ENCODE measurements at regions of chr9 and their contacts with region 1.

Region 1: DNA sequence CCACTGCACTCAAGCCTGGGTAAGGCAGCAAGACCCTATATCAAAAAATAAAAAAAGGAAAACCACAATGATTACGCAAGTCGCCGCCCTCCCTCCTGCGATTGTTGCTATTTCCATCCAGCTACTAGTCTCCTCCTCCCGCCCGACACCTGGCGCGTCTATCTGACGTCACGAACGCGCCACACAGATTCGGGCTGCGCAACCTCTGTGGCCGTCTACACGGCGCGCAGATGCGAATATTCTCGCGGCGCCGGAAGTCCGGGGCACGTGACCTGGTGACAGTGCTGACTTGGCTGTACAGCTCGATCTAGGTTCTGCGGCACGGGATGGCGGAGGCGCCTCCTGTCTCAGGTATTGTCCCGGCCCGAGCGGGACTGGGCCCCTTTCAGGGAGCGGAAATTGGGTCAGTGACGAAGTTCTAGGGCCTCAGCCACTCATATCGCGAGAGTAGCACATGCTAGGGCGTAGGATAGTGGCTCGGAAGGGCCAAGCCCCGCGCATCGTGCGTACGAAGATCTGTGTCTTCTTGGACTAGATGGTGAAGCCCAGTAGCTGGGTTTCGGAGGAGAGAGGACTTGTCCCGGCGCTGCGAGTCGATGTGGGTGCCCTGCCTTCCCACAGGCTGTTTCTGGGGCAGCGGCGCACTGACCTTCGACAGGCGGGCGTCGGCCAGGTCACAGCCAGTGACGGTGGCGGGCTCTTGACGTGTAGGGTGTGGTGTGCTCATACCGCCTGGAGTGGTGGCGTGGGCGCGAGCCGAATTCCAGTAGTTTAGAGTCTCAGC is at the start of gene NFX1:
- DNase-seq: peak; percentile 100
- ATAC-seq: peak; percentile 82
- H3K4me3 ChIP-seq: peak within 1 kb of the TSS; percentile 80 to 98 (median 86)
- H3K4me3 Mint-ChIP-seq: peak within 1 kb of the TSS; percentile 99
- H3K27ac ChIP-seq: peak within 1 kb of the TSS; percentile 99 to 100
- H3K27ac Mint-ChIP-seq: peak within 1 kb of the TSS; percentile 100
- H3K4me1 ChIP-seq: peaks cover 43 to 58% of the 10 kb centered on the region in 2 donors
- H3K4me1 Mint-ChIP-seq: peaks cover 62% of the 10 kb centered on the region
- H3K27me3 ChIP-seq: no peaks in the 10 kb centered on the region
- H3K27me3 Mint-ChIP-seq: no peaks in the 10 kb centered on the region
- CTCF ChIP-seq: no peak
- total RNA-seq, gene NFX1: 76.3 and 81.5 TPM in 2 replicates

Region 2: GRCh38 chr9:32550562-32551433 is 739.6 kb before region 1 on chr9:
- CTCF ChIA-PET with region 1: no interaction called
- POLR2A ChIA-PET with region 1: no interaction called
- intact Hi-C with region 1: loop called (anchors 10 kb)
- DNase-seq: peak; percentile 97
- ATAC-seq: peak; percentile 84
- H3K4me3 ChIP-seq: peak overlapping the region; percentile 86 to 98 (median 87)
- H3K4me3 Mint-ChIP-seq: peak overlapping the region; percentile 91
- H3K27ac ChIP-seq: peak overlapping the region; percentile 89 to 92
- H3K27ac Mint-ChIP-seq: peak overlapping the region; percentile 91
- H3K4me1 ChIP-seq: peaks cover 14 to 15% of the 10 kb centered on the region in 2 donors
- H3K4me1 Mint-ChIP-seq: peaks cover 34% of the 10 kb centered on the region
- H3K27me3 ChIP-seq: no peaks in the 10 kb centered on the region
- H3K27me3 Mint-ChIP-seq: no peaks in the 10 kb centered on the region
- CTCF ChIP-seq: peak; percentile 5

Region 3: DNA sequence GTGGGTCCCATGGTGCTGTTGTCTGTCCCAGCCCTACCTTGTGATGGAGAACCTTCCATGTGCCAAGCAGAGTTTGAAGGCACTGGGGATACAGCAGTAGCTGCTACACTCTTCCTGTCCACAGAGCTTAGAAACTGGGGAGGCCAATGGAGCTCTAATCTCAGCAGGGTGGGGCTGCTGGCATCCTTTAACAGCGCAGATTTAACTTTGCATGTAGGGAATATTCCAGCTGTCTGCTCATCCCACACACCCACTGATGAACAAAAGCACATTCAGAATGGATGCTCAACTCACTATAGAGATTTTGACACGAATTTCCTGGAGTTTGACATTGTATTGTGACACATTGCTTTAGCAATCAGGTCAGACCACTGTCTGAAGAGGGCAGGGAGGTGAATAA is 458.1 kb before region 1 on chr9:
- CTCF ChIA-PET with region 1: no interaction called
- POLR2A ChIA-PET with region 1: no interaction called
- intact Hi-C with region 1: no loop called
- DNase-seq: no peak
- ATAC-seq: no peak
- H3K4me3 ChIP-seq: no peak overlapping the region
- H3K4me3 Mint-ChIP-seq: no peak overlapping the region
- H3K27ac ChIP-seq: no peak overlapping the region
- H3K27ac Mint-ChIP-seq: no peak overlapping the region
- H3K4me1 ChIP-seq: no peaks in the 10 kb centered on the region
- H3K4me1 Mint-ChIP-seq: no peaks in the 10 kb centered on the region
- H3K27me3 ChIP-seq: peaks cover 0 to 5% (median 0%) of the 10 kb centered on the region in 4 experiments
- H3K27me3 Mint-ChIP-seq: peaks cover 18% of the 10 kb centered on the region
- CTCF ChIP-seq: no peak

Region 4: DNA sequence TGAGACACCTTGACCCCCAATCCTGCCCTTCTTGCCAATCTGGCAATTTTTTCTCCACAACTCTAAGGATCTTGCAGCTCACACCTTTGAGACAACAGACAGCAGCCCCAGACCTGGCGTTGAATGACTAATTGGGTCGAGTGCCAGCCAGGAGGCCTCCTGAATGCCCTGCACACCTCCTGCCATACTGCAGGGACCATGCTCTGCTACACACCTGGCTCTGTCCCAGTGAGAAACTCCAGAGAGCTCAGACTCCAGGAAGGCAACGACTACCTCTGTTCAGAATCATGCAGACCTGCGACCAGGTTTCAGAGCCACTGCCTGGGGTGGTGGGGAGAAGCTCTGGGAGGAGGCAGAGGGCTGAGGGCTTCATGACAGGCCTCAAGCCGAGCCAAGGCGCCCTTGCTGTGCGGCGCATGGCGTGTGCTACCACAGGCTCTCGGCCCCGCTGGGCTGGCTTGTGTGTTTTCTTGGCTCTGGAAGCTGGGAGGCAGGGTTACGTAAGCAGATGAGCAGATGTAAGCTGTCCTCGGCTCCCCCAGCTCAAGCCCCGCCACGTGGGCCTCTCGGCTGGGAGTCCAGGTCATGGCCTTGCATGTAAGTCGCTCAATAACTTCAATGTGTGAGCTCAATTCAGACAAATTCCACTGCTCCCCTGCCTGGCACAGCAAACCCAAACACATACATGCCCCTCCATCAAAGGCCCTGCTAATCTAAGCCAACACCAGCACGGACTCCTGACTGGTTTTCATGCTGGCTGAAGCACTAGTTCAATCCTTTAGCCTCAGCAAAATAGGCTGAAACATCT is 150.8 kb before region 1 on chr9:
- CTCF ChIA-PET with region 1: interaction called, 5 read pairs
- POLR2A ChIA-PET with region 1: interaction called, 15 read pairs
- intact Hi-C with region 1: no loop called
- DNase-seq: no peak
- ATAC-seq: no peak
- H3K4me3 ChIP-seq: peak overlapping the region in 1 of 5 experiments; percentile 13
- H3K4me3 Mint-ChIP-seq: peak overlapping the region; percentile 77
- H3K27ac ChIP-seq: peak overlapping the region; percentile 87
- H3K27ac Mint-ChIP-seq: peak overlapping the region; percentile 93
- H3K4me1 ChIP-seq: peaks cover 99 to 100% of the 10 kb centered on the region in 2 donors
- H3K4me1 Mint-ChIP-seq: peaks cover 96% of the 10 kb centered on the region
- H3K27me3 ChIP-seq: no peaks in the 10 kb centered on the region
- H3K27me3 Mint-ChIP-seq: no peaks in the 10 kb centered on the region
- CTCF ChIP-seq: no peak

Region 5: DNA sequence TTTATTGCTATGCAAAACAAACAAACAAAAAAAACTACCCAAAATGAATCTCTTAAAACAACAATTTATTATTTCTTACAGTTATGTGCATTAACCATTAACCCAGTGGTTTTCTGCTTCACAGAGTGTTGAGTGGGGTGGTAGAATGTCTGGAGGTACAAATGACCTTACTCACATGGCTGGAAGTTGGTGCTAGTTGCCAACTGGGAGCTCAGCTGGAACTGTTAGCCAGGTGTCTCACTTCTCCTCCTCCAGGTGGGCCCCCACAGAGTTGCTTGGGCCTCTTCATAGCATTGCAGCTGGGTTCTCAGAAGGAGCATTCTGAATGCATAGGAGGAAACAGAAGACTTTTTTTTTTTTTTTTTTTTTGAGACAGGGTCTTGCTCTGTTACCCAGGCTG is 112.8 kb before region 1 on chr9:
- CTCF ChIA-PET with region 1: no interaction called
- POLR2A ChIA-PET with region 1: no interaction called
- intact Hi-C with region 1: no loop called
- DNase-seq: no peak
- ATAC-seq: no peak
- H3K4me3 ChIP-seq: no peak overlapping the region
- H3K4me3 Mint-ChIP-seq: no peak overlapping the region
- H3K27ac ChIP-seq: no peak overlapping the region
- H3K27ac Mint-ChIP-seq: peak overlapping the region; percentile 10
- H3K4me1 ChIP-seq: no peaks in the 10 kb centered on the region
- H3K4me1 Mint-ChIP-seq: peaks cover 6% of the 10 kb centered on the region
- H3K27me3 ChIP-seq: no peaks in the 10 kb centered on the region
- H3K27me3 Mint-ChIP-seq: no peaks in the 10 kb centered on the region
- CTCF ChIP-seq: no peak

Region 6: DNA sequence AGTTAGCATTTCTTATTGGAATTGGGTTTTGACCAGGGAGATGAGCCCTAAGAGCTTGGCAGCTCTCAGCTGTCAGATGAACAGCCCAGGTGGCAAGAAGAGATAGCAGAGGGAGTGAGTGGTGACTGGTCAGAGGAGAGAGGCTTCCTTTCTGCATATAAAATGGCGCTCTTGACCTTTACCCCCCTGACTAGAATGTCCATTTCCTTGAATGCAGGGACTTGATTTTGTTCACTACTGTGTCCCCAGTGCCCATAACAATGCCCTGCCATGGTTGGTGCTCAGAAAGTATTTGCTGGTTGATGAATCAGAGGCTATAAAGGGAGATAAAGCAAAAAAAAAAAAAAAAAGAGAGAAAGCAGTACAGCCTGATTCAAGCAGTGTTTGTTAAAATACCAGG is 18.4 kb before region 1 on chr9:
- CTCF ChIA-PET with region 1: interaction called, 10 read pairs
- POLR2A ChIA-PET with region 1: no interaction called
- intact Hi-C with region 1: no loop called
- DNase-seq: no peak
- ATAC-seq: no peak
- H3K4me3 ChIP-seq: no peak overlapping the region
- H3K4me3 Mint-ChIP-seq: no peak overlapping the region
- H3K27ac ChIP-seq: no peak overlapping the region
- H3K27ac Mint-ChIP-seq: no peak overlapping the region
- H3K4me1 ChIP-seq: no peaks in the 10 kb centered on the region
- H3K4me1 Mint-ChIP-seq: peaks cover 6% of the 10 kb centered on the region
- H3K27me3 ChIP-seq: no peaks in the 10 kb centered on the region
- H3K27me3 Mint-ChIP-seq: no peaks in the 10 kb centered on the region
- CTCF ChIP-seq: no peak

Region 7: GRCh38 chr9:33329117-33329563 is 38.7 kb after region 1 on chr9:
- CTCF ChIA-PET with region 1: interaction called, 5 read pairs
- POLR2A ChIA-PET with region 1: no interaction called
- intact Hi-C with region 1: loop called (anchors 5 kb)
- DNase-seq: no peak
- ATAC-seq: no peak
- H3K4me3 ChIP-seq: no peak overlapping the region
- H3K4me3 Mint-ChIP-seq: no peak overlapping the region
- H3K27ac ChIP-seq: no peak overlapping the region
- H3K27ac Mint-ChIP-seq: peak overlapping the region; percentile 28
- H3K4me1 ChIP-seq: no peaks in the 10 kb centered on the region
- H3K4me1 Mint-ChIP-seq: no peaks in the 10 kb centered on the region
- H3K27me3 ChIP-seq: no peaks in the 10 kb centered on the region
- H3K27me3 Mint-ChIP-seq: no peaks in the 10 kb centered on the region
- CTCF ChIP-seq: no peak

Region 8: DNA sequence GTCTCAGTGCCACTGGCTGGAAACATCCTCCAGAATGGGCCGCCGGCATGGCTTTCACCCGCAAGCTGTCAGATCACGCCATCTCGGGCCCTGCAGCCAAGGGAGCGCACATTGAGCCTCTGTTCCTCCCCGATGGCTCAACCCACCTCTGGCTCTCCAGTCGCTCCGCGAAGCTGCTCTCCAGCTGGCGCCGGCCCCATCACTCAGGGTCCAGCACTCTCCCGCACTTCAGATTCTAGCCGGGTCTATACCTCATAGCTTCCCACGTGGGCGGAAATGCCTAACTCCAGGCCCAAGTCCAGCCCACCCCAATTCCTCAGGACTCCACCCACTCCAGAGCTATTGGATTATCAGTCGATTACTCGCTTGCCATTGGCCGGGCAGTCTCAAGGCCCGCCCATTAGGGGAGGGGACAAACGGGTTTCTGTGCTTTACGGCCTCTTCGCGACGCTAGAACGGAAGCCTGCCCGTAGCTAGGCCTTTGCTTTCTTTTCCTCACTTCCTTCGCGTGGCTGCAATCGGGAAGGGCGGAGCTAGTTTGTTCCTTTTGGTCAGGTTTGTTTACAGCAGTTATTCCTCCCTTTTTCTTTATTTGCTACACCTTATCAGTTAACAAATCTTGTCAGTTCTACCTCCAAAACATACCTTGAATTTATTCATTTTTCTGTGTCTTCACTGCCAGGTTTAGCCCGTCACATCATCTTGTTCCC is 183.4 kb after region 1 on chr9 and contains the start of gene NOL6:
- CTCF ChIA-PET with region 1: interaction called, 24 read pairs
- POLR2A ChIA-PET with region 1: interaction called, 9 read pairs
- intact Hi-C with region 1: loop called (anchors 1 kb)
- DNase-seq: peak; percentile 99
- ATAC-seq: peak; percentile 99
- H3K4me3 ChIP-seq: peak within 1 kb of the TSS; percentile 80 to 99 (median 95)
- H3K4me3 Mint-ChIP-seq: peak within 1 kb of the TSS; percentile 99
- H3K27ac ChIP-seq: peak within 1 kb of the TSS; percentile 44 to 81
- H3K27ac Mint-ChIP-seq: peak within 1 kb of the TSS; percentile 92
- H3K4me1 ChIP-seq: peaks cover 17 to 22% of the 10 kb centered on the region in 2 donors
- H3K4me1 Mint-ChIP-seq: peaks cover 28% of the 10 kb centered on the region
- H3K27me3 ChIP-seq: no peaks in the 10 kb centered on the region
- H3K27me3 Mint-ChIP-seq: no peaks in the 10 kb centered on the region
- CTCF ChIP-seq: no peak
- total RNA-seq, gene NOL6: 31.8 and 31.9 TPM in 2 replicates